Activated CD4-positive, alpha-beta T cell treated with anti-CD3 and anti-CD28 coated beads for 36 hours (primary cell): ENCODE measurements at regions of chr10 and their contacts with region 1.

Region 1: GRCh38 chr10:5623081-5623748 is 43.2 kb downstream of the ASB13 start:
- DNase-seq: peak; percentile 93
- ATAC-seq: peak; percentile 95
- H3K4me3 Mint-ChIP-seq: no peak overlapping the region
- H3K27ac Mint-ChIP-seq: no peak overlapping the region
- H3K4me1 Mint-ChIP-seq: peaks cover 2% of the 10 kb centered on the region
- H3K27me3 Mint-ChIP-seq: peaks cover 4% of the 10 kb centered on the region

Region 2: DNA sequence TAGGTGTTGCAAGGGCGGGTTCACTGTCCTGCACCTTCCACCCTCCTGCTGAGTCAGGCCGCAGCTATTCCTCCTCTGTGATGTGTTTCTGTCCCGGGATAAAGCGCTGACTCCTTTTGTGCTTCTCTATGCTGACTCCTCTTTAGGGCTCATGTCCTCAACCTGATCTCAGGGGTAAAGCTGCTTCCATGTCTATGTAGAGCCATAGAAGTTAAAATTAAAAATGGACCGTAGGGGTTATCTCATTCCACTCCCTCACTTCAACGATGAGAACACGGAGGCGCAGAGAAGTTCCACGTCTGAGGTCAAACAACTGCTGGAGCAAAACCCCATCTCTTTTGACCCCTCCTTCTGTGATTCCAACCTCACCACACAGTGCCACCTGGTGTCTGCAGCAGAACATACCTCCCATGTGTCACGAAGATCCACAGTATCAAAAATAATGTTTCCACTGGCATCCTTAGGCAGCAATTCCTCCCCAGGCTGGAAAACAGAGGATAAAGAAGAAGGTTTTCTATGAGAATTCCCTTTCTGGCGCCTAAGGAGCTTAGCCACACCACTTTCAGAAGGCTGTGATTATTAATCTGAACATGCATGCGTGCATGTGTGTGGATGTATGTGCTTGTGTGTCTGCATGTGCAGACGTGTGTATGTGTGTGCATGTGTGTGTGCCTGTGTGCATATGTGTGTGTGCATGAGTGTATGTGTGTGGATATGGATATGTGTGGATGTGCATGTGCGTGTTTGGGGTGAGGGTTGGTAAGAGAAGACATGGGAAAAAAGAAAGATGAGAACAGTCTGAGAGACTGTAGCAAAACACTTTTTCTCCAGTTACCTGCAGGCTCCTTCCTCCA is 339.7 kb before region 1 on chr10:
- CTCF ChIA-PET with region 1: no interaction called
- POLR2A ChIA-PET with region 1: no interaction called
- intact Hi-C with region 1: loop called in 1 of 2 experiments (anchors 5 kb)
- DNase-seq: peak; percentile 78
- ATAC-seq: peak; percentile 83
- H3K4me3 Mint-ChIP-seq: no peak overlapping the region
- H3K27ac Mint-ChIP-seq: peak overlapping the region; percentile 74
- H3K4me1 Mint-ChIP-seq: peaks cover 21% of the 10 kb centered on the region
- H3K27me3 Mint-ChIP-seq: peaks cover 7% of the 10 kb centered on the region

Region 3: DNA sequence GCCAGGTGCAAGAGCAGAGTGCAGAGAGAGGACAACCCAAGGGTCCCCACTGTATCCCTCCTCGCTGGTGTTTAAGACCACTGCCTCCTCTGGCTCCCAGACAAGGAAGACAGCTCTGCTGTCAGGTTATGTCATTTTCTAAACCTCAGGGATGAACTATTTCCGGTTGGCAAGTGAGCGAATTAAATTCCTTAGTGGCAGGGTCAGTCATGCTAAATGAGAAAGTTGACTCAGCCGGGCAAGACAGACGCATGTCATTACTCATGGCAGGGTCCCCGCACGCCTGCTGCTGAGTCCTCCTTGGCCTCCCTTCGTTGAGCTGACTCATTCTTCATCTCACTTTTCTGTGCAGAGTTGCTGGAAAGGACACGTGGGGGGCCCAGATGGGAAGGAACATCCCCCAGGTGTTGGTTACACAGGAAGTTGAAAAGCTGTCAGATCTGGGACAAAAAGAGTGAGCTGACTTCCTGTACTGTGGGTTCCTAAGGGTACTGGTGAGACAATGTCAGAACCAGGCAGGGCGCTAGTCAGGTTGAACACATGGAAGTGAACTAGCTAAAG is 305.6 kb before region 1 on chr10:
- CTCF ChIA-PET with region 1: no interaction called
- POLR2A ChIA-PET with region 1: no interaction called
- intact Hi-C with region 1: no loop called
- DNase-seq: peak; percentile 91
- ATAC-seq: peak; percentile 98
- H3K4me3 Mint-ChIP-seq: peak overlapping the region; percentile 17
- H3K27ac Mint-ChIP-seq: peak overlapping the region; percentile 72
- H3K4me1 Mint-ChIP-seq: peaks cover 39% of the 10 kb centered on the region
- H3K27me3 Mint-ChIP-seq: no peaks in the 10 kb centered on the region

Region 4: GRCh38 chr10:5434017-5434753 is 189.0 kb before region 1 on chr10:
- CTCF ChIA-PET with region 1: interaction called, 178 read pairs
- POLR2A ChIA-PET with region 1: no interaction called
- intact Hi-C with region 1: no loop called
- DNase-seq: no peak
- ATAC-seq: peak; percentile 57
- H3K4me3 Mint-ChIP-seq: no peak overlapping the region
- H3K27ac Mint-ChIP-seq: no peak overlapping the region
- H3K4me1 Mint-ChIP-seq: peaks cover 13% of the 10 kb centered on the region
- H3K27me3 Mint-ChIP-seq: no peaks in the 10 kb centered on the region

Region 5: GRCh38 chr10:5461914-5462840 is 161.0 kb before region 1 on chr10:
- CTCF ChIA-PET with region 1: interaction called, 11 read pairs
- POLR2A ChIA-PET with region 1: interaction called, 3 read pairs
- intact Hi-C with region 1: no loop called
- DNase-seq: no peak
- ATAC-seq: no peak
- H3K4me3 Mint-ChIP-seq: no peak overlapping the region
- H3K27ac Mint-ChIP-seq: no peak overlapping the region
- H3K4me1 Mint-ChIP-seq: peaks cover 17% of the 10 kb centered on the region
- H3K27me3 Mint-ChIP-seq: no peaks in the 10 kb centered on the region

Region 6: GRCh38 chr10:5548527-5549223 is 74.5 kb before region 1 on chr10:
- CTCF ChIA-PET with region 1: interaction called, 19 read pairs
- POLR2A ChIA-PET with region 1: no interaction called
- intact Hi-C with region 1: loop called (anchors 2 to 5 kb)
- DNase-seq: peak; percentile 85
- ATAC-seq: peak; percentile 95
- H3K4me3 Mint-ChIP-seq: no peak overlapping the region
- H3K27ac Mint-ChIP-seq: no peak overlapping the region
- H3K4me1 Mint-ChIP-seq: peaks cover 35% of the 10 kb centered on the region
- H3K27me3 Mint-ChIP-seq: peaks cover 2% of the 10 kb centered on the region